ENCODE measurements at regions of chr17 and their contacts with region 1.

Region 1: GRCh38 chr17:37844158-37844976 is 79.8 kb upstream of the TBC1D3K start:
- DNase-seq: no peak
- H3K4me3 ChIP-seq: no peak overlapping the region; the same call in 1 of the 2 replicates
- CTCF ChIP-seq: peak; percentile 93

Region 2: DNA sequence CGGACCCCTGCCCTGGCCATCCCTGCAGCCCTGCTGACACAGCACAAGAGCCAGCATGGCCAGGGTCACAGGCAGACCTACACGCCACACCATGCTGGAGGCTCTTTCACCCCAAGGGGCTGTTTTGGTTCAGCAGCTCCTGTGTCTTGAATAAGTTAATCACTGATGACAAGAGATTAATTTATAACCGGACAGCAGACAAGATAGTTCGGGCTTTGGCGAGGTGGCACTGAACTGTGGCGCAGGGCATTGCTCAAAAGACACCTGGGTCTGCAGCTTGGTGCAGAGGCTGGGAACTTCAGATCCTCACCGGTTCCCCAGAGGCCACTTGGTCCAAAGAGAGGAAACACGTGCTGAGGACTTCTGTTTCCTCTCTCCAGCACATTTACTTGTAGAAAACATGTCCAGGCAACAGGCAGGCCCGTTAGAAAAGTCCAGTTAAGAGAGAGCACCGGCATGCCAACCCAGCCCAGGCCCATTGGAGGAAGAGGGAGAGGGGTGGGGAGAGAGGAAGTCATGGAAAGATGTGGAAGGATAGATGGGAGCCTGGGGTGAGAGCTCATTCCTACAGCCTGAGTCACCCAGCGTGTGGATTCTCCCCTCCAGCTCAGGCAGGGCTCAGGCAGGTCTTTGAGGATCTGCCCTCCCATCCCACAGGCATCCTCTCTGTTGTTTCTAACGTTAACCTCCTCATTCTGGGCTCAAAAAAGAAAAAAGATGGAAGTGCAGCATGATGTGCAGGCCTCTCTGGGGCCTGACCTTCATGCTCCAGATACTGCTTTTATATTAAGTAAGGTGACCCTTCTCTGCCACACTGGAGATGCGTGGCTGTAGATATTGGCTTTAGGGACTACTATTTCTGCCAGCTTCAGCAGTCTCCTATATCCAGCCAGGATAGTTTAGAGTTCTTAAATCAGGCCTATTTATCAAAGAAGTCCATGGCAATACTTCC is 19.6 kb before region 1 on chr17:
- CTCF ChIA-PET with region 1: interaction called, 10 read pairs
- POLR2A ChIA-PET with region 1: no interaction called
- DNase-seq: no peak
- H3K4me3 ChIP-seq: no peak overlapping the region
- CTCF ChIP-seq: no peak

Measured in AG04449 (cell line).